ENCODE measurements at regions of chr22 and their contacts with region 1.

Region 1: GRCh38 chr22:43273902-43274484 is 69.2 kb downstream of the SCUBE1 start:
- DNase-seq: peak; percentile 70
- ATAC-seq: peak; percentile 60
- H3K4me3 Mint-ChIP-seq: no peak overlapping the region
- H3K27ac Mint-ChIP-seq: no peak overlapping the region
- H3K4me1 Mint-ChIP-seq: peaks cover 51% of the 10 kb centered on the region
- H3K27me3 Mint-ChIP-seq: no peaks in the 10 kb centered on the region
- CTCF ChIP-seq: peak; percentile 61; the same call in 1 of the 2 replicates

Region 2: DNA sequence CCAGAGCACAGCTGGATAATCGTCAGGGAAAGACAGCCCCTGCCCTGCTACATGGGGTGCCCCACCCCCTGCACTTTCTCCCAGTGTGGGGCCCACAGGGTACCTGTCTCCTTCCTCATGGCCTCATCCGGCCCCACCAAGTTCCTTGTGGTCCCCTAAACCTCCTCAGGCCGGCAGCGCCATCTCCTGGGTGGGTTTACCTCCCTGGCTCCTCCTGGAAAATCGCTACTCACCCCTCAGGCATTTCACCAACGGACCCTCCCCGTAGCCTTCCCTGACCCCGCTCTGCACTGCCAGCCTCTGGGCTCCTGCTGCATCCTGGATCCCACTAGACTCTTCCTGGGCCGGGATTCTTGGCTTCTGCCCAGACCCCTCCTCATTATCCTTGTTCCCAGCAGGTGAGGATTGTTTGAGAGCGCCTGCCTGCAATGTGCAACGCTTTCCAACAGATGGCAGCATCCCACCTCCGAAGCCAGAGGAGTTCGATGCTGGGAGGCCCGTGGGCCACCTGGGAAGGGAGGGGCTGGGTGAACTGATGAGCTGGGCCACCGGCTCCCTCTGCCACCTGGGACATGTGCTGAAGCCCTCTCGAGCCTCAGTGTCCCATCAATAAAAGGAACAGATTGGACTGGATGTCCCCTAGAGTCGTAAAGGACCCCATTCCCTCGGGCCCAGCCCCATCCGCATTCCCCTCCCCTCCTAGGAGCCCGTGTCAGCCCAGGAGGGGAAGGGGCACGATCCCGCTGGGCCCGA is 42.8 kb before region 1 on chr22:
- CTCF ChIA-PET with region 1: interaction called, 267 read pairs
- POLR2A ChIA-PET with region 1: no interaction called
- DNase-seq: peak; percentile 89
- ATAC-seq: peak; percentile 54
- H3K4me3 Mint-ChIP-seq: peak overlapping the region; percentile 45
- H3K27ac Mint-ChIP-seq: peak overlapping the region; percentile 79
- H3K4me1 Mint-ChIP-seq: peaks cover 19% of the 10 kb centered on the region
- H3K27me3 Mint-ChIP-seq: no peaks in the 10 kb centered on the region; the same call in 1 of the 2 replicates
- CTCF ChIP-seq: peak; percentile 97

Region 3: GRCh38 chr22:43263645-43264514 is 10.1 kb before region 1 on chr22:
- CTCF ChIA-PET with region 1: interaction called, 26 read pairs
- POLR2A ChIA-PET with region 1: no interaction called
- DNase-seq: no peak
- ATAC-seq: no peak
- H3K4me3 Mint-ChIP-seq: no peak overlapping the region
- H3K27ac Mint-ChIP-seq: peak overlapping the region; percentile 5; the same call in 1 of the 2 replicates
- H3K4me1 Mint-ChIP-seq: peaks cover 7% of the 10 kb centered on the region; the same call in 1 of the 2 replicates
- H3K27me3 Mint-ChIP-seq: no peaks in the 10 kb centered on the region
- CTCF ChIP-seq: no peak

Region 4: DNA sequence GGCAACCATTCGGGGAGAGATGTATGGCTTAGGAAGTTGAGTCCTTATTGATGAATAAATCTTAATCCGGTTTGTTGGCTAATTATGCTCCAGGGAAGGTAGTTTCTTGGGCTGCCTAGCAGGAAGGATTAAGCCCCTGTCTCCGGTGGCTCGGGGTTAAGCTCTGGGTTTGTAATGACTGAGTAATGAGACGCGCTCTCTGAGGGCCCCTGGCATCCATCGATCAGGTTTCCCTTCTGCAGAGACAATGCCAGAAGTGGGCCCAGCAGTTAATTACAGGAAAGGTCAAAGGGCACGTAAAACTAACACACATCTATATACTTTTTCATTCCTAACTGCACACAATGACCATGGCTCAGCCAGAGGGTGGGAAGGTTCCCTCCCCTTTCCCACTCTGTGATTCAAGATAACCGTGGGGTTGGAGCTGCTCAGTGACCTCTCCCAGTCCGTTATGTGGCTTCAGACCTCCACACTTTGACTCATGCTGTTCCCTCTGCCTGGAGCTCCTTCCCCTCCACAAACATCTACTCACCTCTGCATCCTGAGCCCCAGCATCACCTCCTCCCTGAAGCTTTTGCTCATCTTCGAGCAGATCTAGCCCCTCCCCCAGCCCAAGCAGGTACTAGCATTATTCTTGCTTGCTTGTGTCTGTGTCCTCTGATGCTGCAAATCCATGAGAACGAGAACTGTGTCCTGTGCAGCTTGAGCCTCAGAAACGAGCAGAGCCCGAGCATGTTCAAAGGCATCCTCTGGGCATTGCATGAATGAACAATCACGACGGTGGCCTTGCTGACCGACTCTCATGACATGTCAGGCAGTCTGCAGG is 52.6 kb after region 1 on chr22:
- CTCF ChIA-PET with region 1: interaction called, 24 read pairs
- POLR2A ChIA-PET with region 1: no interaction called
- DNase-seq: no peak
- ATAC-seq: no peak; the same call in 1 of the 2 replicates
- H3K4me3 Mint-ChIP-seq: no peak overlapping the region
- H3K27ac Mint-ChIP-seq: no peak overlapping the region
- H3K4me1 Mint-ChIP-seq: peaks cover 33% of the 10 kb centered on the region
- H3K27me3 Mint-ChIP-seq: no peaks in the 10 kb centered on the region; the same call in 1 of the 2 replicates
- CTCF ChIP-seq: no peak

Region 5: DNA sequence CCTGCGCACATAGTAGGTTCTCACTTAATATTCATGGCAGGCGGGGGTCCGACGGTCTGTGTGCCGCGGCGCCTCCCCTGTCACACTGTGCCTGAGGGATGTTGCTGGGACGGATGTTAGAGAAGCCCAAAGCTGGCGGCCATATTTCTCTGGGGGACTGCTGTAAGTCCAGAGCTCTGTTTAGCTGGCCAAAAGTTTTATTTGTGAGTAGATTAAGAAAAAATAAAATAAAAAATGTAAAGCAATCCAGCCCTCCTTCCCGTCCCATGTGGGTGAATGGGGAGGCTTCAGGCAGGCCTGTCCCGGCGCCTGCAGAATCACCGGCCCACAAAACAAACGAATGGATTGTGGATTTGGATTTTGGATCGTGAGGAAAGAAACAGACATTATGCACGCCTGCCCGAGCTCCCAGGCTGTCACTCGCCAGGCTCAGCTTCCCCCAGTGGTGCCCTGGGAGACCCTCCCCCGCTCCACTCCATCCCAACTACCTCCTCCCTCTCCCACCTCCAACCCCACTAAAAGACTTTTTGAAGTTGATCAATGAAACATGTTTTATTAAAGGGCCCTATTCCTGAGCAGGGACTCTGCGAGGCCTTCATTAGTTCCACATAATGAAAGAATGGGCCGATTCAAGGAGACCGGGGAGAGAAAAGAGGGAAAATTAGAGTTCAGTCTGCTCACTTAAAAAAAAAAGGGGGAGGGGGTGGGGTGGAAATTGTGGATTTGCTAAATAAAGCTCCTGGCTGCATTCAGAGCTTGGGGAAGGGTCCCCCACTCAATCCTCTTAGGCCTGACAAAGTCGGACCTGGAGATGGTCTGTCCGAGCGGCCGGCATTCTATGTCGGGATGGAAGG is 89.5 kb after region 1 on chr22:
- CTCF ChIA-PET with region 1: interaction called, 17 read pairs
- POLR2A ChIA-PET with region 1: interaction called, 4 read pairs
- DNase-seq: no peak
- ATAC-seq: 0 out of 2 replicates have a peak, but pooled peaks have one; percentile 38
- H3K4me3 Mint-ChIP-seq: no peak overlapping the region
- H3K27ac Mint-ChIP-seq: no peak overlapping the region; the same call in 1 of the 2 replicates
- H3K4me1 Mint-ChIP-seq: peaks cover 11% of the 10 kb centered on the region
- H3K27me3 Mint-ChIP-seq: no peaks in the 10 kb centered on the region; the same call in 1 of the 2 replicates
- CTCF ChIP-seq: no peak

Measured in WTC11 (cell line).